CD14-positive monocyte (primary cell): ENCODE measurements at regions of chr11 and their contacts with region 1.

Region 1: DNA sequence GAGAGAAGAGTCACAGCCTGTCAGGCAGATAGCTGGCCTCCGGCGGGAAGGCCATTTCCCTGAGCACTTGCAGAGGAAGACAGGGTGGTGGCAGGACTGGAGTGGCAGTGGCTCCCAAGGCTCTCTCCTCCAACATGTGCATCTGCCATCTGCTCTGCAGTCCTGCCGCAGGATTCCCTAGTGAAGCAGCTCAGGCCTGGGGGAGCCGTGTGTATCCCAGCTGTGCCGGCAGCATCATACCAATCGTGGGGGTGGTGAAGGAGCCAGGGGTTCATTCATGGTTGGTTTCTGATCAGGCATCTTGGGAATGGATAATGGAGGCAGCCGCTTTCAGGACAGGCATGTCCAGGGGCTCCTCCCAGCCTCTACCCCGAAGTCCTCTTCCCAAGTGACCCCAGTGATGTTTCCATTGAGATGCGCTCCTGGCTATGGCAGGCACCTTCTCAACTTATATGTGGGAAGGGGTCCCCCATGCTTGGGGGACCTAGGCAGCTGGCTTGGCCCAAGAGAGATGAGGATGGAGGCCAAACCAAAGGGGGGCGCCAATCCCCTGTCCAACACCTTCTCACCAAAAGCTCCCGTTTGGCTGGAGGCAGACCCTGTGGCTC is 6.1 kb downstream of the TAGLN start:
- DNase-seq: no peak
- H3K4me3 ChIP-seq: no peak overlapping the region
- H3K4me3 Mint-ChIP-seq: no peak overlapping the region
- H3K27ac ChIP-seq: no peak overlapping the region
- H3K27ac Mint-ChIP-seq: peak overlapping the region in 4 of 7 donors; percentile 31 to 70 (median 36)
- H3K4me1 ChIP-seq: peaks cover 0 to 6% of the 10 kb centered on the region in 2 donors
- H3K4me1 Mint-ChIP-seq: peaks cover 9% of the 10 kb centered on the region
- H3K27me3 ChIP-seq: no peaks in the 10 kb centered on the region
- H3K27me3 Mint-ChIP-seq: peaks cover 0 to 4% (median 0%) of the 10 kb centered on the region in 3 donors
- CTCF ChIP-seq: no peak

Region 2: DNA sequence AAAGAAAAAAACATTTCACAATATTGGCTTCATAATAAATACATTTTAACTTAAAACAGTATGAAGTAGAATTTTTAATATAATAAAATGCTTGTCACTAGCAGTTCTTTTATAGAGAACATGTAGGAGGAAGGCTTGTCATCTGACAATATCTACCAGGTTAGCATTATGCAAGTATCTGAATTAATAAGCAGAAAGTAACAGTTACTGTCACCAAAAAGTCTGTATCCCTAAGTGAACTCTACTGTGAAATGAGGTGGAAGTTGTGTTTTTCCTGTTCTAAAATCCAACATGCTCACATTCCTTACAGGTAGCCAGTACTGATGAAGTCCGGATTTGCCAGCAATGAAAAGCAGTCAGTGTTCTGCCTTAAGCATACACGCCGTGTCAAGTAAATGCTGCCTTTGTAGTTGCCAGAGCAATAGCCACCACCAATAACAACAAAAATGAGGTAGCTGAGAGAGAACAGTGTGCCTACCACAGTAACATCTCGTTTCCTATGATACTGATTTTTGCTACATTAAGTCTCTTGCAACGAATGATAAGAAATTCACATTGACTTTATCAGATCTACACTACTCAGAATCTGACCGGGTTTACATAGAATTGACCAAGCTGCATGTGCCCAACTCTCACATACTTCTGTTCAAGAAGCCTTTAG is 202.5 kb before region 1 on chr11:
- intact Hi-C with region 1: no loop called
- DNase-seq: no peak
- H3K4me3 ChIP-seq: no peak overlapping the region
- H3K4me3 Mint-ChIP-seq: no peak overlapping the region
- H3K27ac ChIP-seq: peak overlapping the region in 1 of 2 donors; percentile 87
- H3K27ac Mint-ChIP-seq: peak overlapping the region; percentile 91 to 99 (median 94)
- H3K4me1 ChIP-seq: peaks cover 74 to 92% of the 10 kb centered on the region in 2 donors
- H3K4me1 Mint-ChIP-seq: peaks cover 84% of the 10 kb centered on the region
- H3K27me3 ChIP-seq: no peaks in the 10 kb centered on the region
- H3K27me3 Mint-ChIP-seq: no peaks in the 10 kb centered on the region
- CTCF ChIP-seq: no peak

Region 3: GRCh38 chr11:117127171-117127901 is 78.0 kb before region 1 on chr11:
- intact Hi-C with region 1: loop called (anchors 2 to 5 kb)
- DNase-seq: no peak
- H3K4me3 ChIP-seq: no peak overlapping the region
- H3K4me3 Mint-ChIP-seq: no peak overlapping the region
- H3K27ac ChIP-seq: no peak overlapping the region
- H3K27ac Mint-ChIP-seq: no peak overlapping the region
- H3K4me1 ChIP-seq: no peaks in the 10 kb centered on the region
- H3K4me1 Mint-ChIP-seq: no peaks in the 10 kb centered on the region
- H3K27me3 ChIP-seq: peaks cover 0 to 3% of the 10 kb centered on the region in 2 donors
- H3K27me3 Mint-ChIP-seq: peaks cover 4 to 13% (median 9%) of the 10 kb centered on the region in 3 donors
- CTCF ChIP-seq: no peak

Region 4: GRCh38 chr11:117134431-117134830 is 70.9 kb before region 1 on chr11:
- intact Hi-C with region 1: loop called (anchors 2 to 5 kb)
- DNase-seq: no peak
- H3K4me3 ChIP-seq: no peak overlapping the region
- H3K4me3 Mint-ChIP-seq: no peak overlapping the region
- H3K27ac ChIP-seq: no peak overlapping the region
- H3K27ac Mint-ChIP-seq: no peak overlapping the region
- H3K4me1 ChIP-seq: no peaks in the 10 kb centered on the region
- H3K4me1 Mint-ChIP-seq: peaks cover 3% of the 10 kb centered on the region
- H3K27me3 ChIP-seq: no peaks in the 10 kb centered on the region
- H3K27me3 Mint-ChIP-seq: peaks cover 1 to 12% (median 3%) of the 10 kb centered on the region in 3 donors
- CTCF ChIP-seq: no peak

Region 5: GRCh38 chr11:117171404-117172061 is 33.8 kb before region 1 on chr11:
- intact Hi-C with region 1: no loop called
- DNase-seq: no peak
- H3K4me3 ChIP-seq: no peak overlapping the region
- H3K4me3 Mint-ChIP-seq: no peak overlapping the region
- H3K27ac ChIP-seq: no peak overlapping the region
- H3K27ac Mint-ChIP-seq: peak overlapping the region in 6 of 7 donors; percentile 59 to 83 (median 62)
- H3K4me1 ChIP-seq: no peaks in the 10 kb centered on the region
- H3K4me1 Mint-ChIP-seq: peaks cover 7% of the 10 kb centered on the region
- H3K27me3 ChIP-seq: no peaks in the 10 kb centered on the region
- H3K27me3 Mint-ChIP-seq: no peaks in the 10 kb centered on the region
- CTCF ChIP-seq: no peak